H1 (cell line): ENCODE measurements at regions of chr11 and their contacts with region 1.

Region 1: GRCh38 chr11:102733232-102733875 is 8.6 kb upstream of the MMP8 start:
- DNase-seq: peak; percentile 57 to 88
- H3K4me3 ChIP-seq: no peak overlapping the region
- H3K27ac ChIP-seq: no peak overlapping the region
- H3K4me1 ChIP-seq: no peaks in the 10 kb centered on the region
- H3K27me3 ChIP-seq: no peaks in the 10 kb centered on the region
- CTCF ChIP-seq: peak; percentile 85 to 95 (median 88)
- EP300 ChIP-seq: no peak
- POLR2A ChIP-seq: no peak
- RAD21 ChIP-seq: peak; percentile 94 to 95

Region 2: GRCh38 chr11:102749101-102749722 is 15.9 kb after region 1 on chr11:
- CTCF ChIA-PET with region 1: interaction called, 12 read pairs
- POLR2A ChIA-PET with region 1: no interaction called
- DNase-seq: no peak
- H3K4me3 ChIP-seq: no peak overlapping the region
- H3K27ac ChIP-seq: no peak overlapping the region
- H3K4me1 ChIP-seq: peaks cover 0 to 5% (median 4%) of the 10 kb centered on the region in 4 experiments; a peak in 4 of 7 replicates
- H3K27me3 ChIP-seq: no peaks in the 10 kb centered on the region
- CTCF ChIP-seq: no peak
- EP300 ChIP-seq: no peak
- POLR2A ChIP-seq: no peak
- RAD21 ChIP-seq: peak; percentile 35 to 45

Region 3: DNA sequence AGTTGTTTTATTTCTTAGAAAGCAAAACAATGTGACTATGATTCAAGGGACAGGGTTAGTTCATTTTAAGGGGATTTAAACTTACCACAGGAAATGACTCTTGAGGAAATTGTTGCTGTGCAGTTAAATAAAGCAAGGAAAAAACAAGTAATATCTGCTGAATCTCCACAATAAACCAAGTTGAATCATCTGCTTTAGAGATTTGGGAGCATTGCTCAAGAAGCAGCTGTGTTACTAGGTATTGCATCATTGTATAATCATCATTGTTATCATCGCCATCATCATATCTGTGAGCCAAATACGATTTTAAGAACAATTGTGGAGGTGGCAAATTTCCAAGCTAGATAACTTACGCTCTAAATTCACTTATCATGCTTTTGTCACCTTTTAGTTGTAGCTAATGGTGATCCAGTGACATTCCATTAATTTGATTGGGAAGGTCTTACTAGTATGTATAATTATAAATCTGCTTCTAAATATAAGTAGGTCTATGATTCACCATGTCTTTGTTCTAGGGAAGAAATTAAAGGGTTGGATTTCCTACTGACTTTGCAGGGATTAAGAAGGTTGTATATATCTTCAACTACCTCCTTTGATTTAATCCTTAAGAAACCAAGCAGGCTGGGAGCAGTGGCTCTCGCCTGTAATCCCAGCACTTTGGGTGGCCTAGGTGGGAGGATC is 27.1 kb after region 1 on chr11:
- CTCF ChIA-PET with region 1: interaction called, 12 read pairs
- POLR2A ChIA-PET with region 1: no interaction called
- DNase-seq: no peak
- H3K4me3 ChIP-seq: no peak overlapping the region
- H3K27ac ChIP-seq: no peak overlapping the region
- H3K4me1 ChIP-seq: peaks cover 0 to 4% (median 1%) of the 10 kb centered on the region in 4 experiments; a peak in 1 of 7 replicates
- H3K27me3 ChIP-seq: peaks cover 0 to under 1% (median 0%) of the 10 kb centered on the region in 4 experiments; a peak in 1 of 7 replicates
- CTCF ChIP-seq: no peak
- EP300 ChIP-seq: no peak
- POLR2A ChIP-seq: no peak
- RAD21 ChIP-seq: no peak

Region 4: GRCh38 chr11:102780491-102780918 is 47.2 kb after region 1 on chr11 and contains the start of gene MMP10:
- CTCF ChIA-PET with region 1: interaction called, 31 read pairs
- POLR2A ChIA-PET with region 1: interaction called, 3 read pairs
- DNase-seq: peak in 1 of 2 experiments; percentile 27
- H3K4me3 ChIP-seq: no peak within 1 kb of the TSS
- H3K27ac ChIP-seq: no peak within 1 kb of the TSS
- H3K4me1 ChIP-seq: peaks cover 0 to 3% (median under 1%) of the 10 kb centered on the region in 4 experiments; a peak in 2 of 7 replicates
- H3K27me3 ChIP-seq: no peaks in the 10 kb centered on the region
- CTCF ChIP-seq: peak in 2 of 3 experiments; percentile 11 to 62; a peak in 2 of 4 replicates
- EP300 ChIP-seq: no peak
- POLR2A ChIP-seq: no peak
- RAD21 ChIP-seq: peak in 1 of 2 experiments; percentile 34; a peak in 1 of 4 replicates
- total RNA-seq, gene MMP10: 0.17 TPM in 1 of 2 replicates, not detected in the other

Region 5: GRCh38 chr11:102810945-102811660 is 77.7 kb after region 1 on chr11:
- CTCF ChIA-PET with region 1: interaction called, 13 read pairs
- POLR2A ChIA-PET with region 1: no interaction called
- DNase-seq: no peak
- H3K4me3 ChIP-seq: no peak overlapping the region
- H3K27ac ChIP-seq: no peak overlapping the region
- H3K4me1 ChIP-seq: no peaks in the 10 kb centered on the region
- H3K27me3 ChIP-seq: no peaks in the 10 kb centered on the region
- CTCF ChIP-seq: peak in 2 of 3 experiments; percentile 43 to 60; a peak in 2 of 4 replicates
- EP300 ChIP-seq: no peak
- POLR2A ChIP-seq: no peak
- RAD21 ChIP-seq: peak; percentile 47 to 48; a peak in 3 of 4 replicates

Region 6: DNA sequence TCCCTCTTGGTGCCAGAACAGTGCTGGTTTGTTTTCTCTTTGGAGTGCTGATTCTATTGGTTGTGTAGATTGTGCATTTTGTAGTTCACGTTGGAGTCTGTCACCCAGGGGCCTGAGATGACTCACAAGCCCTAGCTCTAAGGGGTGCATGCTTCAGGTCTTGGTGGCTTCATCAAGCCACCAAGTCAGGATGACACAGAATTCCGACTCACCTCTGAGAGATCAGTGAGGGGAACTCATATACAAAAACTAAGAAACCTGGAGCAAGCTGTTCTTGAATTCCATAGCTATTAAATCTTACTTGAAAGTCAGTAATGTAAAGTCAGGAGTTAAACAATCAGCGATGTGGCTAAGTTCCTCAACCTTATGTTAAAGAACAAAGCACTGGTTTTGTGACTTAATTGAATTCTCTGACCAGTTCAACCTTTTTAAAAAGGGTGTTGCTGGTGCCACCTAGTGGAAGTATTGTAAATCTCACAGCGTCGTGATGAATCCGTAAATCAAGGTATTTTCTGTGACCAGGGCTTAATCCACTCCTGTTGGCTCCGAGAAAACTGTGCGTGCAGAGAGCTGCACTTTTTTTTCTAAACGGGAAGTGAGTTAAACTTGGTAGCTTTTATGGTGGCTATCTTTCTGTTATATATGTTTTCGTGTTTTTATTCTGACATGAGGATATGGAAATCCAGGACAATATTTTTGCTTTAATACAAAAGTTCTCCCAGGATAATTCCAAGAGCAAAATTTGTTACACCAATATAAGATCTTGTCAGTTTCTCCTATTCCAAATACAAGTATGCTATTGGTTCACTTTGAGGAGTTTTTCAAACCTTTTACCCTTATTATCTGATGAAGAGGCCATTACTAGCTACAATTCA is 207.6 kb after region 1 on chr11:
- CTCF ChIA-PET with region 1: interaction called, 33 read pairs
- POLR2A ChIA-PET with region 1: no interaction called
- DNase-seq: peak in 1 of 2 experiments; percentile 7
- H3K4me3 ChIP-seq: no peak overlapping the region
- H3K27ac ChIP-seq: no peak overlapping the region
- H3K4me1 ChIP-seq: no peaks in the 10 kb centered on the region; a peak in 1 of 7 replicates
- H3K27me3 ChIP-seq: no peaks in the 10 kb centered on the region
- CTCF ChIP-seq: peak in 2 of 3 experiments; percentile 77 to 83; a peak in 3 of 4 replicates
- EP300 ChIP-seq: no peak
- POLR2A ChIP-seq: no peak
- RAD21 ChIP-seq: peak; percentile 80 to 82

Region 7: GRCh38 chr11:103035791-103036434 is 302.6 kb after region 1 on chr11:
- CTCF ChIA-PET with region 1: interaction called, 10 read pairs
- POLR2A ChIA-PET with region 1: no interaction called
- DNase-seq: no peak
- H3K4me3 ChIP-seq: no peak overlapping the region
- H3K27ac ChIP-seq: no peak overlapping the region
- H3K4me1 ChIP-seq: no peaks in the 10 kb centered on the region; a peak in 1 of 7 replicates
- H3K27me3 ChIP-seq: no peaks in the 10 kb centered on the region
- CTCF ChIP-seq: peak in 2 of 3 experiments; percentile 18 to 70; a peak in 2 of 4 replicates
- EP300 ChIP-seq: no peak
- POLR2A ChIP-seq: no peak
- RAD21 ChIP-seq: peak; percentile 44 to 46